Mammary epithelial cell (primary cell): ENCODE measurements at regions of chr12 and their contacts with region 1.

Region 1: GRCh38 chr12:1583421-1584078 is 10.8 kb downstream of the FBXL14 start:
- DNase-seq: peak; percentile 70
- H3K4me3 ChIP-seq: no peak overlapping the region
- H3K27ac ChIP-seq: no peak overlapping the region
- H3K4me1 ChIP-seq: peaks cover 7% of the 10 kb centered on the region
- H3K27me3 ChIP-seq: no peaks in the 10 kb centered on the region
- CTCF ChIP-seq: peak; percentile 80 to 88

Region 2: GRCh38 chr12:559924-560457 is 1023.6 kb before region 1 on chr12:
- CTCF ChIA-PET with region 1: no interaction called
- dilution Hi-C with region 1: no loop called
- in situ Hi-C with region 1: loop called (anchors 25 kb)
- intact Hi-C with region 1: loop called (anchors 5 kb)
- DNase-seq: no peak
- H3K4me3 ChIP-seq: no peak overlapping the region
- H3K27ac ChIP-seq: no peak overlapping the region
- H3K4me1 ChIP-seq: no peaks in the 10 kb centered on the region
- H3K27me3 ChIP-seq: peaks cover 5% of the 10 kb centered on the region
- CTCF ChIP-seq: no peak

Region 3: GRCh38 chr12:949453-950191 is 633.9 kb before region 1 on chr12 and contains the start of gene RAD52:
- CTCF ChIA-PET with region 1: no interaction called
- dilution Hi-C with region 1: no loop called
- in situ Hi-C with region 1: no loop called
- intact Hi-C with region 1: loop called (anchors 1 kb)
- DNase-seq: peak; percentile 98
- H3K4me3 ChIP-seq: peak within 1 kb of the TSS; percentile 56 to 89 (median 68)
- H3K27ac ChIP-seq: peak within 1 kb of the TSS; percentile 62
- H3K4me1 ChIP-seq: peaks cover 18% of the 10 kb centered on the region
- H3K27me3 ChIP-seq: no peaks in the 10 kb centered on the region
- CTCF ChIP-seq: peak; percentile 64 to 93
- total RNA-seq, gene RAD52: 11.7 to 16.5 TPM

Region 4: GRCh38 chr12:1197264-1198018 is 386.1 kb before region 1 on chr12:
- CTCF ChIA-PET with region 1: no interaction called
- dilution Hi-C with region 1: no loop called
- in situ Hi-C with region 1: no loop called
- intact Hi-C with region 1: loop called (anchors 10 kb)
- DNase-seq: peak; percentile 96
- H3K4me3 ChIP-seq: no peak overlapping the region
- H3K27ac ChIP-seq: peak overlapping the region; percentile 82
- H3K4me1 ChIP-seq: peaks cover 27% of the 10 kb centered on the region
- H3K27me3 ChIP-seq: no peaks in the 10 kb centered on the region
- CTCF ChIP-seq: no peak

Region 5: DNA sequence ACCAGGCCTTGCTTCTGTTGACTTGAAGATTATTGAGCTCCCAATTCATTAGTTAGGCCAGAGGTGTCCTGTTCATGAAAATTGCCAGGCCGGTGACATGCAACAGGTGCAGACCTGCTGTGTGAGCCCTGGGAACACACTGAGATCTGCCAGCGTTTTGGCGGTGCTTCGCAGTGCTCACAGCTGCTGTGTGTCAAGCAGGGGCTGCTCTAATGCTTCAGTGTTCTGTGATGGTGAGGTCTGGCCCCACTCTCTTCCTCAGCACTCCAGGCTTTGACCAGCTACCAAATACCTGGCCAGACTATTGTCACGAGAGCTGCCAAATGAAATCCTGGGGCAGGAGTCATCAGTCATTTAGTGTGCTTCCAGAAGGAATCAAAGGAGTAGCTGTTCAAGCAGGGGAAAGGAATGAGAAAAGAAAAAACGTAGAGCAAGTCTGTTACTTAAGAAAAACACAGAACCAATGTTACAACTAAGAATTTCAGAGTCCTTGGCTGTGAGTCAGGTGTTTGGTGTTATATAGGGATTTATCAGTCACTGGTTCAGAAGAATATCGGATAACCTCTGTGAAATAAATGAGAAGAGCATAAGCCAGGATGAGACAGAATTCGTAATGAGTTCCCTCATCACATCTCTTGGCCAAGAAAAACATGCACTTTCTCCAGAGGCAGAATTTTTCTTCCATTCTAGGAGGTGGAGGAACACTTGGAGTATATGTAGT is 140.0 kb before region 1 on chr12:
- CTCF ChIA-PET with region 1: no interaction called
- dilution Hi-C with region 1: no loop called
- in situ Hi-C with region 1: no loop called
- intact Hi-C with region 1: loop called (anchors 1 kb)
- DNase-seq: peak; percentile 78
- H3K4me3 ChIP-seq: peak overlapping the region; percentile 16 to 31 (median 22)
- H3K27ac ChIP-seq: peak overlapping the region; percentile 55
- H3K4me1 ChIP-seq: peaks cover 23% of the 10 kb centered on the region
- H3K27me3 ChIP-seq: no peaks in the 10 kb centered on the region
- CTCF ChIP-seq: no peak

Region 6: GRCh38 chr12:1518591-1519541 is 64.7 kb before region 1 on chr12:
- CTCF ChIA-PET with region 1: no interaction called
- dilution Hi-C with region 1: no loop called
- in situ Hi-C with region 1: no loop called
- intact Hi-C with region 1: no loop called
- DNase-seq: peak; percentile 93
- H3K4me3 ChIP-seq: peak overlapping the region; percentile 9 to 44 (median 41)
- H3K27ac ChIP-seq: peak overlapping the region; percentile 72
- H3K4me1 ChIP-seq: peaks cover 33% of the 10 kb centered on the region
- H3K27me3 ChIP-seq: no peaks in the 10 kb centered on the region
- CTCF ChIP-seq: no peak

Region 7: DNA sequence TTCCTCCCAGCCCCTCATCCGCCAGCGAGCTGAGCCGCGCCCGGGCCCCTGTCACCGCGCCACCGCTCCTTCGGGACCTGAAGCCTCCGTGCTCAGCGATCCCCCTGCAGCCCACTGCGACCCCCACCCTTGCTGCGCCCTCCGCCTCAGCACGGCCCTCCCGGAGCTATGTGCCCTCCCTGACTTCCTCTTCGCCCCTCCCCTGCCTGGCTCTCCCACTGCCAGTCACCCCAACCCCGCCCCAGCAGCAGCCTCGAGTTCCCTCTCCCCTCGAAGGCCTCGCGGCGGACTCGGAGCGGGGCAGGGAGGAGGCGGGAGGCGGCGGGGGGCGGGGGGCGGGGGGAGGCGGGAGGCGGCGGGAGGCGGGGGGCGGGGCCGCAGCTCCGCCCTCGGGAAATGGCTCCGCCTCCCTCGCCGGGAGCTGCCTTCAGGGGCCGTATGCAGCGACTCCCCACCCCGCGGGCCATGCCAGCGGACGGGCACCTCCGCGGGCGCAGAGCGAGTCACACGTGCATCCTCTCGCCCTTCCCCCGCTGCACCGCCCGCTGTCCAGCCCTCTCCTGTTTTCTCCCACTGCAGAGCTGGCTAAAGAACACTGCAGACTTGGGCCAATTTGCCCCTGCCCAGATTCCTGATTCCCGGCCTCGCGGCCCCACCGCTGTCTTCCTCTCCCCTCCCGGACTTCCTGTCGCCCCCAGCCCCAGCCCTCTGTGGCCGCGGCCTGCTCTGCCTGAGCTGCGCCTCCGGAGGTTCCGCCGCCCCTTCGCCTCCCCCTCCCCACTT is 78.2 kb after region 1 on chr12:
- CTCF ChIA-PET with region 1: no interaction called
- dilution Hi-C with region 1: no loop called
- in situ Hi-C with region 1: no loop called
- intact Hi-C with region 1: no loop called
- DNase-seq: peak; percentile 80
- H3K4me3 ChIP-seq: peak overlapping the region in 2 of 3 experiments; percentile 34 to 53
- H3K27ac ChIP-seq: peak overlapping the region; percentile 29
- H3K4me1 ChIP-seq: peaks cover 22% of the 10 kb centered on the region
- H3K27me3 ChIP-seq: no peaks in the 10 kb centered on the region
- CTCF ChIP-seq: no peak